ENCODE measurements at regions of chr5 and their contacts with region 1.

Region 1: DNA sequence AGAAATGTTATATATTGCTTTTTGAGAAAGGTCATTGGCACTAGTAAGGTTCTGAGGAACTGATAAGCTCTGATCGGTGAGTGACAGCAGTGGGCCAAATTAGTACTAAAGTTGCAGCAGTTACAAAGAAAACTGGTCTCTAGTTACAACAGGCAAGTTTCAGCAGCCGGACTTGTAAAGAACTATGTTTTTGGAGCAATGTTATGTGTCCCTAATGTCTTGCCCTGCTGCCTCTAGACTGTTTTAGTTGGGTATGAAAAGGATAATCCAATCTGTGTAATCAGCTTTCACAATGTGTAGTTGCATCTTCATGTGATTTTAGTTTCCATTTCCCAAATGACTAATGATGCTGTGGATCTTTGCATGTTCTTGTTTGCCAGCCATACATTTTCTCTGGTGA is 113.5 kb downstream of the CAMK4 start:
- DNase-seq: peak; percentile 10
- H3K4me3 Mint-ChIP-seq: peak overlapping the region; percentile 11
- H3K27ac Mint-ChIP-seq: peak overlapping the region; percentile 78
- H3K4me1 Mint-ChIP-seq: peaks cover 74% of the 10 kb centered on the region
- H3K27me3 Mint-ChIP-seq: no peaks in the 10 kb centered on the region

Region 2: DNA sequence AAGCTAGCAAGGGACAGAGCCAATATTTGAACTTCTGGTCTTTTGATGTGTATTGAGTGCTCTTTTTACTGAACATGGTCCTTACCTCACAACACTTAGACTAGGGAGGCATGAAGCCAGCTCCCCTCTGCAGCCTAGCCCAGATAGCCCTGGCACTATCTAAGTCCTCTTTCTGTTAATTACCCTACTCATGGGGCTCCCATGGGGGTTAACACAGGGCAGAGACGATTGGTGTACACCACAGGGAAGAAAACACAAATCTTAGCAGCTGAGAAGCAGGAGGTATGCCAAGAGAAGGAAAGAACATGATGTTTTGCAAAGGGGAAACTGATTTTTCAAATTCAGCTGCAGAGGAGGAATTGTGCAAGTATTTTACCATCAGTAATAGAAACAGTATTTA is 995.0 kb before region 1 on chr5:
- CTCF ChIA-PET with region 1: no interaction called
- intact Hi-C with region 1: no loop called
- DNase-seq: no peak
- H3K4me3 Mint-ChIP-seq: no peak overlapping the region
- H3K27ac Mint-ChIP-seq: no peak overlapping the region
- H3K4me1 Mint-ChIP-seq: no peaks in the 10 kb centered on the region
- H3K27me3 Mint-ChIP-seq: no peaks in the 10 kb centered on the region

Region 3: DNA sequence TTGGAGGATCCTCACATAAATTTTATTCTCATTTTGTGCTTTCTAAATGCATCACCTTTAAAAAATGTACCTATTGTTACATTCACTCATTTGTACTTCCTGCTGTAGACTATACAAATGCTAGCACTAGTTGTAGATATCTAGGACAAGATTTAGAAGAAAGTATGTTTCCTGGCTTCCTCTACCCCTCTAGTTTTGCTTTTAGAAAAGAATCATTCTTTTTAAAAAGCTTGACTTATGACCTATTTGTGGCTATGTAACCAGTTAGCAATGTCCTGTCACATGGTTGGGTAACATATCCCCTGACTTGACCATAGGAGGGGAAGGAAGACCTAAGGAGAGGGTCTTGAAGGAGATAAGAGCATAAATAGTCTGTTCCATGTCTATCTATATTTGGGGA is 100.2 kb before region 1 on chr5:
- CTCF ChIA-PET with region 1: interaction called, 3 read pairs
- intact Hi-C with region 1: loop called (anchors 2 kb)
- DNase-seq: no peak
- H3K4me3 Mint-ChIP-seq: peak overlapping the region; percentile 66
- H3K27ac Mint-ChIP-seq: peak overlapping the region; percentile 89
- H3K4me1 Mint-ChIP-seq: peaks cover 90% of the 10 kb centered on the region
- H3K27me3 Mint-ChIP-seq: no peaks in the 10 kb centered on the region

Region 4: GRCh38 chr5:111284825-111285224 is 52.9 kb before region 1 on chr5:
- CTCF ChIA-PET with region 1: interaction called, 7 read pairs
- intact Hi-C with region 1: loop called (anchors 1 kb)
- DNase-seq: no peak
- H3K4me3 Mint-ChIP-seq: no peak overlapping the region
- H3K27ac Mint-ChIP-seq: no peak overlapping the region
- H3K4me1 Mint-ChIP-seq: peaks cover 71% of the 10 kb centered on the region
- H3K27me3 Mint-ChIP-seq: no peaks in the 10 kb centered on the region

Region 5: DNA sequence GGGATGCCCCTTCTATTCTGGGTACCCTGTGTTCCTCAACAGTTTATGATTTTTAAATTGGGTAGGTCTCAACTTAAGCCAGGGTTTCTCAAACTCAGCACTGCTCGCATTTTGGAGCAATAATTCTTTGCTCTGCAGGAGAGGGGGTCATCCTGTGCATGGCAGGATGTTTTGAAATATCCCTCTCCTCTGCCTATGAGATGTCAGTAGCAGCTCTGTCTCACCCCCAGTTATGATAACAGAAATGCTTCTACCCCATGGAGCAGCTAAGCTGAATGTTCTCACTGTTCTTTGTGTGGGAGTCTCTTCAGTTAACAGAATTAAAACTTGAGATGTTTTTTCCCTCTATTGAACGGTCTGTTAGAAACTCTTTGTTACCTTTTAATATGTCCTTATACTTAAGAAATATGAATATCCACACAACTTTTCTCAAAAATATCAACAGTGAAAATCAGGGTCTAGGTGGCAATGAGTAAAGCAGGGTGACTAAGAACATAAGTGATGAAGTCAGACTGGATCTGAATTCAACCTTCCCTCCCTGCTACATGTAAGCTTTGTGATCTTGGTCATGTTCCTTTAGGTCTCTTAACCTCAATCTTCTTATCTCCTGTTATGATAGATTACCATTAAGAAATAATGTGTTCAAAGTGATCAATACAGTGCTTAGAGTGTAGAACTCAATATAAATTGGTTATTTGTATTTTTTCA is 24.5 kb before region 1 on chr5:
- CTCF ChIA-PET with region 1: interaction called, 4 read pairs
- intact Hi-C with region 1: loop called (anchors 1 kb)
- DNase-seq: no peak
- H3K4me3 Mint-ChIP-seq: no peak overlapping the region
- H3K27ac Mint-ChIP-seq: peak overlapping the region; percentile 51
- H3K4me1 Mint-ChIP-seq: peaks cover 83% of the 10 kb centered on the region
- H3K27me3 Mint-ChIP-seq: no peaks in the 10 kb centered on the region

Region 6: GRCh38 chr5:111401906-111402305 is 64.2 kb after region 1 on chr5:
- CTCF ChIA-PET with region 1: no interaction called
- intact Hi-C with region 1: no loop called
- DNase-seq: no peak
- H3K4me3 Mint-ChIP-seq: no peak overlapping the region
- H3K27ac Mint-ChIP-seq: no peak overlapping the region
- H3K4me1 Mint-ChIP-seq: peaks cover 27% of the 10 kb centered on the region
- H3K27me3 Mint-ChIP-seq: no peaks in the 10 kb centered on the region

Region 7: DNA sequence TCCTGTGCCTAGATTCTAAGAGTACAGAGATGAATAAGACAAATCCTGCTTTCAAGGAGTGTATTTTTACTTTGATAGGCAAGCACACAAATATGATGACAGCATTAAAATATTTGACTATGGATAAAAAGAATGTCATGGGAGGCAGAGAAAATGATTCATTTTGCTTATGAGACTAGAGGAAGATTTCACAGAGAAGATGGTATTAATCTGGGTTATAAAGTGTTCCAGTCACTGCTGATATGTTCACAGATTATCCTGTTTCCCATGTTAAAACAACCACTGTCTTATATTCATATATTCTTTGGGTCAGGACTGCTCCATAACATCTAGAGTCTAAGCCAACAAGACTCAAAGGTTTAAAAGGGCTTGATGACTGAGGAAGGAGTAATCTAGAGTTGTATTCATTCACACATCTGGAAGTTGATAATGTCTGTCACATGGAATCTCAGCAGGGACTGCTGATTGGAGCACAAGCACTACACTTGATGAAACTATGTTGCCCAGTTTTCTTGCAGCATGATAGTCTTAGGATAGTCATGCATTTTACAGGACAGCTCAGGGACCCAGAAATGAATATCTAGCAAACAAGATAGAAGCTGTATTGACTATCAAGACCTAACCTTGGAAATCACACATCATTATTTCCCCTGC is 95.3 kb after region 1 on chr5:
- CTCF ChIA-PET with region 1: no interaction called
- intact Hi-C with region 1: no loop called
- DNase-seq: no peak
- H3K4me3 Mint-ChIP-seq: no peak overlapping the region
- H3K27ac Mint-ChIP-seq: no peak overlapping the region
- H3K4me1 Mint-ChIP-seq: peaks cover 33% of the 10 kb centered on the region
- H3K27me3 Mint-ChIP-seq: no peaks in the 10 kb centered on the region

Region 8: GRCh38 chr5:111512375-111513130 is 174.9 kb after region 1 on chr5 and contains the start of gene STARD4:
- CTCF ChIA-PET with region 1: no interaction called
- intact Hi-C with region 1: loop called (anchors 2 kb)
- DNase-seq: peak; percentile 95
- H3K4me3 Mint-ChIP-seq: peak within 1 kb of the TSS; percentile 93
- H3K27ac Mint-ChIP-seq: peak within 1 kb of the TSS; percentile 94
- H3K4me1 Mint-ChIP-seq: peaks cover 37% of the 10 kb centered on the region
- H3K27me3 Mint-ChIP-seq: no peaks in the 10 kb centered on the region
- total RNA-seq, gene STARD4: 45.0 to 47.1 TPM

Measured in activated naive CD4-positive, alpha-beta T cell treated with anti-CD3 and anti-CD28 coated beads for 36 hours (primary cell).